ENCODE measurements at regions of chr6 and their contacts with region 1.

Region 1: GRCh38 chr6:18091382-18091781 is 31.1 kb downstream of the NHLRC1 start:
- DNase-seq: no peak
- ATAC-seq: no peak
- H3K4me3 ChIP-seq: no peak overlapping the region
- H3K27ac ChIP-seq: no peak overlapping the region
- H3K4me1 ChIP-seq: no peaks in the 10 kb centered on the region
- H3K27me3 ChIP-seq: no peaks in the 10 kb centered on the region
- CTCF ChIP-seq: no peak
- POLR2A ChIP-seq: no peak
- RAD21 ChIP-seq: no peak

Region 2: DNA sequence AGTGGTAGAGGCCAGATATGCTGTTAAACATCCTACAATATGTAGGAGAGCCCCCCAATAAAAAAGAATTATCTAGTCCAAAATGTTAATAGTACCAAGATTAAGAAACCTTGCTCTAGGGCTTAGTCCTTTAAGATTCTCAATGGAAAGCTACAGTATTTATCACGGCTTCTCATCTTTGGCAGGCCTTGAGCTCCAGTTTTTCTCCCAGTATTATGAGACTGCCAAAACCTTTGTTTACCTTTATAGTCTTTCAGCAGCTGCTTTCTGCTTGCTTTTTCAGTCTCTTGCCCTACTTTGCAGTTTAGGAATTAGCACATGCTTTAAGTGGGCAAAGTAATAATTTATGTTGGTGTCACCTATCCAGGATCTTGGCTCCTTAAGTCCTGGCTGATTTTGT is 28.6 kb before region 1 on chr6:
- CTCF ChIA-PET with region 1: no interaction called
- POLR2A ChIA-PET with region 1: no interaction called
- RAD21 ChIA-PET with region 1: no interaction called
- intact Hi-C with region 1: no loop called
- DNase-seq: no peak
- ATAC-seq: no peak
- H3K4me3 ChIP-seq: no peak overlapping the region
- H3K27ac ChIP-seq: no peak overlapping the region
- H3K4me1 ChIP-seq: no peaks in the 10 kb centered on the region
- H3K27me3 ChIP-seq: no peaks in the 10 kb centered on the region
- CTCF ChIP-seq: no peak
- POLR2A ChIP-seq: no peak
- RAD21 ChIP-seq: no peak

Region 3: DNA sequence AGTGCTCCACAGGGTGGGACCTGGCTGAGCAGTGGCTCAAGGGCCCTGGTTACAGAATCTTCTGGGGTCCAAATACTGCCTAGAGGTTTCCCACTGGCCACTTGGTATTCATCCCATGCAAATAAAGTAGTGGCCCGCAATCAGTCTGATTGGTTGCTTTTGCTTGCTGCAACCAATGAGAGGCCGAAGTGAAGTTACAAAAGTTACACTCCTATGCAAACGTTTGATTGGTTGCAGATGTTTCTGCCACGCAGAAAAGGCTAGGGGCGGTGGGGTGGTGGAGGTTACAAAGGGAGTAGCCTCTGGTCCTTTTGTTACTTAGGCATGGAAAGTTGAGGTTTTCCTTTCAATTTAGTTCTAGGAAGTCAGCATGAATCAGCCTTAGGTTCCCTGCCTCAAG is 34.7 kb after region 1 on chr6:
- CTCF ChIA-PET with region 1: no interaction called
- POLR2A ChIA-PET with region 1: no interaction called
- RAD21 ChIA-PET with region 1: no interaction called
- intact Hi-C with region 1: loop called (anchors 1 kb)
- DNase-seq: no peak
- ATAC-seq: no peak
- H3K4me3 ChIP-seq: no peak overlapping the region
- H3K27ac ChIP-seq: no peak overlapping the region
- H3K4me1 ChIP-seq: no peaks in the 10 kb centered on the region
- H3K27me3 ChIP-seq: no peaks in the 10 kb centered on the region
- CTCF ChIP-seq: no peak
- POLR2A ChIP-seq: no peak
- RAD21 ChIP-seq: no peak

Region 4: DNA sequence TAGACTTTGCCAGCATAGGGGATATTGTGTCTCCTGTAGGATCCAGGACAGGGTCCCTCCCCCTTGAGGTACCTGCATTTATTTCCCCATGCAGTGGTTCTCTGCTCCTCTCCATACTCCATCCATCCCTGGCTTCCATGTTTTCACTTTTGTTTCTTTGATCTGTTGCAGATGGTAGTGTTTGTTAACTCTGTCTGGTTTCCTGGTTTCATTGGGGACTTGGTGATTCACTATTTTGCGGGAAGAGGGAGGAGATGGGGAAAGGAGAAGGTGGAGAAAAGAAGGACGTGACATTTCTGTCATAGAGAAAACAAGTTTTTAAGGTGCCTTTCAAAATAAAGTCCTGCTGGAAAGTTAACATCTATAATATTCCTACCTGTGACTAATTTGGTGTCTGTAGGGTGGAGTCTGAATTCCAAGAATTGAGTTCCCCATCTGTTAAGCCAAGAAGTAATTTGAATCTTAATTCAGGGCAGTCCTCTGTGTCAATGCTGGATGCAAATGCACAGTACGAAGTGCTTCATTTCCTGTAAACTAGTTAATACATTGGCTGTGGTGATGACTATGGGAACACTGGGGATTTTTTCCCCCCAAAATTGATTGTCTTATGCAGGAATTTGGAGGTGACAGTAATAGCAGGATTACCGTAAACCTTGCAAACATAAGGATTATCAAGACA is 288.9 kb after region 1 on chr6:
- CTCF ChIA-PET with region 1: no interaction called
- POLR2A ChIA-PET with region 1: no interaction called
- RAD21 ChIA-PET with region 1: no interaction called
- intact Hi-C with region 1: no loop called
- DNase-seq: no peak
- ATAC-seq: no peak
- H3K4me3 ChIP-seq: no peak overlapping the region
- H3K27ac ChIP-seq: no peak overlapping the region
- H3K4me1 ChIP-seq: peaks cover 0 to 6% of the 10 kb centered on the region in 2 experiments; a peak in 2 of 4 replicates
- H3K27me3 ChIP-seq: no peaks in the 10 kb centered on the region
- CTCF ChIP-seq: no peak
- POLR2A ChIP-seq: no peak
- RAD21 ChIP-seq: no peak

Measured in HCT116 (cell line).